GM18951 (cell line): ENCODE measurements at regions of chr2 and their contacts with region 1.

Region 1: DNA sequence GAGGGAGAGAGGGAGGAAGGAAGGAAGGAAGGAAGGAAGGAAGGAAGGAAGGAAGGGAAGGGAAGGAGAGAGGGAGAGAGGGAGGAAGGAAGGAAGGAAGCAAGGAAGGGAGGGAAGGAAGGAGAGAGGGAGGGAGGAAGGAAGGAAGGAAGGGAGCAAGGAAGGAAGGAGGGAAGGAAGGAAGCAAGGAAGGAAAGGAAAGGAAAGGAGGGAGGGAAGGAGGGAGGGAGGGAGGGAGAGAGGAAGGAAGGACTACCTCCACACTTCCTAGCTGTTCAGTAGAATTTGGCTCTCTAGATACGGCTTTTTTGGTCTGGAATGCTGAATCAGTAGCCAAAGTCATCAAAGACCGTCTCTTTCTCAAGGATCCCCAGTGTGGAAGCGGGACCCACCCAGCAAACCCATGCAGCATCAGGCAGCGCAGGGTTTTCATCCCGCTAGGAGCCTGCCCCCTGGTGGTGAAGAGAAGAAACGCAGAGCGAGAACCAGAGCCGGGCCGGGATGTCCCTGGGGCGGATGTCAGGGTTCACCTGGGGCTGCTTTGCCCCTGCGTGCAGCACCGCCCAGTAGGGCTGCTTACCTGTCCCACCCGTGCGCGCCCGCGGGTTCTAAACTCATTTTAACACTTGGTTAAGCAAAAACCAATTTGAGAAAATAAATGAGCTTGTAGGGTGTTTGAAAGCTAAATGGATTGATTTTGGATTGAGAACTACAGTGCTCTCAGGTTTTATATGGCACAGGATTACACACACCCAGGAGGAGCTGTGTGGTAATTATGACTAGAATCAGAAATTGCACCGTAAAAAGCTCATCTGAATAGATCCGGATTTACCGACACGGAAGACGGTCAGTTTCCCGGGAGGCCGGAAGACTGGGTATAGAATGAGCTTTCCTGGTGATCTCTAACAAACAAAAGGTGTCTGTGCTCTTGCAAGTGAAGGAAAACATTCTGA is 48.1 kb upstream of the ARL4C start:
- POLR2A ChIP-seq: no peak

Region 2: GRCh38 chr2:235106874-235107639 is 562.1 kb after region 1 on chr2:
- in situ Hi-C with region 1: loop called (anchors 10 kb)
- POLR2A ChIP-seq: no peak

Region 3: GRCh38 chr2:235270956-235271355 is 726.0 kb after region 1 on chr2:
- in situ Hi-C with region 1: no loop called
- POLR2A ChIP-seq: no peak